Dorsolateral prefrontal cortex (tissue), 120 donors: ENCODE measurements at regions of chr5 and their contacts with region 1.

Region 1: GRCh38 chr5:153974131-153974812 is 64.4 kb downstream of the FAM114A2 start:
- DNase-seq: peak in 2 of 10 donors; percentile 24 to 26
- H3K4me3 ChIP-seq: no peak overlapping the region
- H3K27ac ChIP-seq: no peak overlapping the region
- H3K27me3 ChIP-seq: peaks cover 0 to 9% (median 0%) of the 10 kb centered on the region in 45 donors
- CTCF ChIP-seq: peak; percentile 40 to 86 (median 74)

Region 2: DNA sequence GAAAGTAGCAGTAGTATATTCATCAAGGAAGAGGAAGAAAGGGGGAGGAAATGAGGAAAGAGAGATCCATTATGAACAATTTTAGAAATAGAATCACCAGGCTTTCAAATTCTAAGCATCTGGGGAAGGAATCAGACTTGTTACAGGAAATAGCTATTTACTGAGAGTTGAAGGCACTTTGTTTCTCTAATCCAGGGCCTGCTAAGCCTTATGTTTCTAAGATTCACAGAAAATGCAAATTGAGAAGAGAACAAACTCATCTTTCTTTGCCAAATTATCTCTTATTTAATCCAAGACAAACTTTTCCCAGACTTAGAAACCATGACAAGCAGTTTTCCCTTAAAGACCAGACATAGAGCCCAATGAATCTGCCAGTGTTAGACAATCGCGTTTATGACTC is 1041.2 kb before region 1 on chr5:
- intact Hi-C with region 1: no loop called
- DNase-seq: no peak
- H3K4me3 ChIP-seq: no peak overlapping the region
- H3K27ac ChIP-seq: no peak overlapping the region
- H3K27me3 ChIP-seq: no peaks in the 10 kb centered on the region
- CTCF ChIP-seq: no peak

Region 3: DNA sequence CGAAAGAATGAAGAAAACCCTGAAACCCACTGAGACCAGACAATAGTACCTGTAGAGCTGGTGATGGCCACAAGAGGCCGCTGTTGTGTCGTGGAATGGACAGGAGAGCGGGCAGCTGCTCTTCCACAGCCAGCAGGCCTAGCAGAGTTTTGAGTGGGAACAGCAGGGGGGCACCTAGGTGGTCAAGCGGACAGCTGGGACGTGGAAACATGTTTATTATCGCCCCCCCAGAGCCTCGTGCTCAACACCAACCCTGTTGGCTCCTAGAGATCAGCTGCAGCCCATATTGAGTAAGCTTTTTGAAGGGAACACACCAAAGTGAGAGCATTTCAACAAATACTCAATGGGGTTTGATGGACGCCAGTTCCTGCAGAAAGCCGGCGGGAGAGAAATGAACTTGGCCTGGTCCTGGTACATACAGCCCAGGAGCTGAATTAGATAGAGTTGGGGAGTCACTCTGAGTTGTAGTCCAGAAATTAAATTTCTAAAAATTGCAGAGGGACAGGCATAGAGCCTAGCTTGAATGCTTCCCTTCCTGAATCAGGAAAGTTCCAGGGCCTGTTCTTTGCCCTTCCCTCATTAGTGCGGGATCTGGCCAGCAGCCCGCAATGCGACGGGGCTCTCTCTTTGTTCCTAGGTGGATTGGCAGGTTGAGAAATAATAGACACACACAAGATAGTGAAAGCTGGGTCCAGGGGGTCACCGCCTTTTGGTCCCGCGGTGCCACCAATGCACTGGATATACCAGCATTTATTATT is 98.3 kb after region 1 on chr5:
- intact Hi-C with region 1: loop called in 1 of 2 experiments (anchors 10 kb)
- DNase-seq: peak; percentile 64 to 86 (median 81)
- H3K4me3 ChIP-seq: peak overlapping the region in 4 of 59 donors; percentile 10 to 19 (median 15)
- H3K27ac ChIP-seq: peak overlapping the region in 1 of 59 donors; percentile 71
- H3K27me3 ChIP-seq: no peaks in the 10 kb centered on the region
- CTCF ChIP-seq: peak; percentile 64 to 99 (median 95)

Region 4: DNA sequence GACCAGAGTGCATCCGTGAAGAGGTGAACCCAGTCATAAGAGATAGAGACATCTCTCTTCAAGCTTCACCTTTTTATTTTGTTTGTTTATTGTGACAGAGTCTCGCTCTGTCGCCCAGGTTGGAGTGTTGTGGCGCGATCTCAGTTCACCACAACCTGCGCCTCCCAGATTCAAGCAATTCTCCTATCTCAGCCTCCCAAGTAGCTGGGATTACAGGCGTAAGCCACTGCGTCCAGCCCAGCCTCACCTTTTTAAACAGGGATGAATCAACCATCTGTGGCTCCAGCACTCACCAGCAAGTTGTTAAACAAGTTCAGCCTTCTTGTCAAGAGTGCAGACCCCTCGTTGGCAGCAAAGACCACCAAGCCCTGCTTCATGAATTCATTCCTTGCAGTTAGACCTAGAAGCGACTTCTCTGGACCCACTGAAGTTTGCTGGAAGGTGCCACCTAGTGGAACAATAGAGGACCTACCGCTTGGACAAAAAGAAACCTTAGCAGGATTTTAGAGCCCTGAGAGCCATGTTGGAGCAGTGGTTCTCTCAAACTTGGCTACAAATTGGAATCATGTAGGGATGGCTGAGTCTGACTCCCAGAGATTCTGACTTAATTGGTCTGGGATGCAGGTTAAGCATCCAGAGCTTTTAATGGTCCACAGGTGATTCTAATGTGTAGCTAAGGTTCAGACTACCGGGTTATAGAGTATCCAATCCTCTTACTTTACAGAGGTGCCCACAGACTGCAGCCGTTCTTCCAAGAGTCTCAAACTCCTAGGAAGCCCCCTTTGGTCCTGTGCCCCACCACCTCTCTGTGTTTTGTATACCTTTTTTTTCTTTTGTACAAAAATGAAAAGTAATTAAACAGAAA is 205.8 kb after region 1 on chr5:
- intact Hi-C with region 1: loop called (anchors 2 to 10 kb)
- DNase-seq: peak in 2 of 10 donors; percentile 27 to 43
- H3K4me3 ChIP-seq: no peak overlapping the region
- H3K27ac ChIP-seq: no peak overlapping the region
- H3K27me3 ChIP-seq: no peaks in the 10 kb centered on the region
- CTCF ChIP-seq: peak; percentile 54 to 84 (median 77)

Region 5: DNA sequence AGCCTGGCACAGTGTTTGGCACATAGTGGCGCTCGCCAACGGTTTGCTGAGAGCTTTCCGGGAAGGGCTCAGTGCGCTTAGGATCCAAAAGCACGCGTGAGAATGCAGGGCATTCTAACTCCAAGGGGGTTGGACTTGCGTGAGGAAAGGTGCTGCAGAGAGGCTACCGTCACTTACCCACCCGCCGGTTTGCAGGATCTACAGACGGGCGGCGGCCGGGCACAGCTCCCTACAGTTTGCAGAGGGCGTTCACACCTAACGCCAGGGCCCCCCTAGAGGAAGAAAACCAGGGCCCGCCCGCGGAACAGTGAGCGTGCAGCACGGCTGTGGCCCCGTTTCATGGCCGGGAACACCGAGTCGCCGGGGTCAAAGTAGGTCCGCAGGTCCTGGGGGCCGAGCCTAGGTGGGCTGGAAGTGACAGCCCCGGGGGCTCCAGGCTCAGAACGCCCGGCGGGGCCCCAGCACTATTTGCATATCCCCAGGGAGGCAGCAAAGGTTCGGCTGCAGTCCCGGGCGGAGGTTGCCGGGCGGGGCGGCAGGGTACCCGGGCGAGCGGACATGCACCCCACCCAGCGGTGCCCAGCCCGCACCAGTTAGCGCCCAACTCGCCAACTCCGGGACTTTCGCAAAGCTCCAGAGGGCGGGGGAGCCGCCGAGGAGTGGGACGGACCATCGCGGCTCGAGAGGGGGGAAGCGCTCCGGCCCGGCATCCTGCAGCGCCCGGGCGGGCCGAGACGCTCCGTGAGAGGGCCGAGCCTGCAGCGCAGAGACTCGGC is 215.7 kb after region 1 on chr5:
- intact Hi-C with region 1: loop called in 1 of 2 experiments (anchors 10 kb)
- DNase-seq: peak; percentile 62 to 86 (median 80)
- H3K4me3 ChIP-seq: peak overlapping the region; percentile 53 to 98 (median 89)
- H3K27ac ChIP-seq: peak overlapping the region in 47 of 59 donors; percentile 4 to 89 (median 67)
- H3K27me3 ChIP-seq: no peaks in the 10 kb centered on the region
- CTCF ChIP-seq: peak in 50 of 56 donors; percentile 0 to 67 (median 43)

Region 6: GRCh38 chr5:154405078-154405792 is 431.0 kb after region 1 on chr5:
- intact Hi-C with region 1: loop called (anchors 2 to 10 kb)
- DNase-seq: peak; percentile 69 to 87 (median 76)
- H3K4me3 ChIP-seq: peak overlapping the region in 58 of 59 donors; percentile 17 to 70 (median 54)
- H3K27ac ChIP-seq: peak overlapping the region in 4 of 59 donors; percentile 10 to 70 (median 46)
- H3K27me3 ChIP-seq: no peaks in the 10 kb centered on the region
- CTCF ChIP-seq: peak; percentile 48 to 96 (median 86)

Region 7: DNA sequence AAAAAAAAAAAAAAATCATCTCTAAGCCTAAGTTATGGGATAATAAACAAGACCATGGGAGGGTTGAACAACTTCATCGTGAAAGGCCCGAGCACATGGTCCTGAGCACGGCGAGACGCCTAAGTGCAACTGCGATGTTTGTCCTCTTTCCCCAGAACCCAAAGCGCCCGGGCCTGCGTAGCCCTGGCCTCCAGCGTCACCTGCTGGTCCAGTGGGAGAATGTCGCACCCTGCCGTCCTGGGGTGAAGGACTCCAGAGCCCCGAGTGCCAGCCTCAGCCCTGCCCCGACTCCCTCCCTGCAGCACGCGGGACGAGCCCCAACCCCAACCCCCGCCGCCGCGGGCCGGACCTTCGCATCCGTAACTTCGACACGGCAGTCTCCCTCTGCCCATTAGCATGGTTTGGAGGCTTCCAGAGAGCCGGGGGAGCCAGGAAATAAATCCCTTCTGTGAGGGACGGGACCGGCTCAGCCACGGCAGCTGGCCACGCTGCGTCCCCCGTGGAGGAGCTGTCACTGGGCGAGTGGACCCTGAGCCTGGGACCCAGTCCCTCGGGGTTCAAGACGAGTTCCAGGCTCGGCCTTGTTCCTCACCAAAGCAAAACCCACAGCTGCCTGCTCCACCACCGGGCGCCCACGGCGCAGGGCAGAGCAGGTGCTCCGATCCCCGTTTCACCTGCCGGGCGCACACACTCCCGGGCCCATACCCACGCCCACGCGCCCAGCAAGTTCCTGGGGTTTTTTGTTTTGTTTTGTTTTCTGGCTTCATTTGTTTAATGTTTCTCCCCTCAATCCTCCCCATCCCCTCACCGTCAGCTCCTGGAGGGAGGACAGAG is 636.3 kb after region 1 on chr5:
- intact Hi-C with region 1: loop called in 1 of 2 experiments (anchors 10 kb)
- DNase-seq: peak; percentile 28 to 79 (median 66)
- H3K4me3 ChIP-seq: peak overlapping the region in 56 of 59 donors; percentile 4 to 66 (median 42)
- H3K27ac ChIP-seq: no peak overlapping the region
- H3K27me3 ChIP-seq: peaks cover 0 to 65% (median 30%) of the 10 kb centered on the region in 45 donors
- CTCF ChIP-seq: peak; percentile 24 to 89 (median 78)